PC-9 (cell line): ENCODE measurements at regions of chr7 and their contacts with region 1.

Region 1: GRCh38 chr7:139340037-139340807 is 915 bp upstream of the FMC1 start:
- DNase-seq: peak; percentile 99
- H3K4me3 ChIP-seq: peak overlapping the region; percentile 80
- H3K27ac ChIP-seq: peak overlapping the region; percentile 93
- H3K4me1 ChIP-seq: peaks cover 10% of the 10 kb centered on the region; the same call in 1 of the 2 replicates
- H3K27me3 ChIP-seq: no peaks in the 10 kb centered on the region
- CTCF ChIP-seq: peak; percentile 80

Region 2: DNA sequence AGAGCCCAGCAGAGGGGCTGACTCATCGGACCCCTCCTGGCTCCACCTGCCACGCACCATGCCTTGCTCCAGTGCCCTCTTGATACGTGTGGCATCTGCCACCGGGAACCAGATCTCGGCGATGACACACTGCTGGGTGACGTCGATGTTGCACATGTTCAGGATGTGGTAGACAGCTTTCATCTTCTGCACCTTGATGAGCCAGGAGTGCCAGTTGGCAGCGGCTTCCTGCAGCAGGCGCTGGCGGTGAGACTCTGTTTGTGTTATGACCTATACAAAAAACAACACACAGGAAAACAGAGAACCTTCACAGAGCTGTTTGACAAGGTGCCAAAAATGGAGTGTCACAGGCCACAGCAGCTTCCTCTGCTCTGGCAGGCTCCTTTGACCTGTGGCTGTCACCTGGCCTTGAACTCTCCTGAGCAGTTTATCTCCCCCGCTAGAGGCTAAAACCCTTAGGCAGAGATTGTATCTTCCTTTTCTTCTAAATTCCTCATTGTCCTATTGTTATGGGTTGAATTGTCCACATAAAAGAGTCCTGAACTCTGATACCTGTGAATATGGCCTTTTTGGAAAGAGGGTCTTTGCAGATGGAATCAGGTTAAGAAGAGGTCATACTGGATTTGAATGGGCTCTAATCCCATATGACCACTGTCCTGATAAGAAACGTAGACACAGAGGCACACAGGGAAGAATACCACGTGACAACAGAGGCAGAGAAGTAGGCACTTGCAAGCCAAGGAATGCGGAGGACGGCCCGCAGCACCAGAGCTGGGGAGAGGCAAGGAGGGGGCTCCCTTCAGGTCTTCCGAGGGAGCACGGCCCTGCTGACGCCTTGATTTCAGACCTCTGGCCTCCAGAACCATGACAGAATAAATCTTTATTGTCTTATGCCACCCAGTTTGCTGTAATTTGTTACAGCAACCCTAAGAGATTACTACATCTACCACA is 587.4 kb before region 1 on chr7:
- CTCF ChIA-PET with region 1: no interaction called
- POLR2A ChIA-PET with region 1: no interaction called
- intact Hi-C with region 1: loop called (anchors 2 kb)
- DNase-seq: peak; percentile 97 to 100
- H3K4me3 ChIP-seq: no peak overlapping the region
- H3K27ac ChIP-seq: peak overlapping the region; percentile 95
- H3K4me1 ChIP-seq: peaks cover 73% of the 10 kb centered on the region
- H3K27me3 ChIP-seq: no peaks in the 10 kb centered on the region
- CTCF ChIP-seq: no peak

Region 3: GRCh38 chr7:139109188-139109982 is 230.8 kb before region 1 on chr7 and contains the start of gene ZC3HAV1:
- CTCF ChIA-PET with region 1: no interaction called
- POLR2A ChIA-PET with region 1: no interaction called
- intact Hi-C with region 1: loop called (anchors 1 kb)
- DNase-seq: peak; percentile 76 to 88
- H3K4me3 ChIP-seq: peak within 1 kb of the TSS; percentile 93
- H3K27ac ChIP-seq: peak within 1 kb of the TSS; percentile 75
- H3K4me1 ChIP-seq: peaks cover 21% of the 10 kb centered on the region
- H3K27me3 ChIP-seq: no peaks in the 10 kb centered on the region
- CTCF ChIP-seq: no peak
- total RNA-seq, gene ZC3HAV1: 30.8 and 36.7 TPM in 2 replicates

Region 4: GRCh38 chr7:139359366-139360209 is 19.4 kb after region 1 on chr7 and contains the start of gene LUC7L2:
- CTCF ChIA-PET with region 1: no interaction called
- POLR2A ChIA-PET with region 1: interaction called, 3 read pairs
- intact Hi-C with region 1: loop called (anchors 1 kb)
- DNase-seq: peak; percentile 97 to 100
- H3K4me3 ChIP-seq: peak within 1 kb of the TSS; percentile 89
- H3K27ac ChIP-seq: peak within 1 kb of the TSS; percentile 97
- H3K4me1 ChIP-seq: peaks cover 27% of the 10 kb centered on the region
- H3K27me3 ChIP-seq: no peaks in the 10 kb centered on the region
- CTCF ChIP-seq: peak; percentile 4; the same call in 1 of the 2 replicates
- total RNA-seq, gene LUC7L2: 111 and 149 TPM in 2 replicates

Region 5: DNA sequence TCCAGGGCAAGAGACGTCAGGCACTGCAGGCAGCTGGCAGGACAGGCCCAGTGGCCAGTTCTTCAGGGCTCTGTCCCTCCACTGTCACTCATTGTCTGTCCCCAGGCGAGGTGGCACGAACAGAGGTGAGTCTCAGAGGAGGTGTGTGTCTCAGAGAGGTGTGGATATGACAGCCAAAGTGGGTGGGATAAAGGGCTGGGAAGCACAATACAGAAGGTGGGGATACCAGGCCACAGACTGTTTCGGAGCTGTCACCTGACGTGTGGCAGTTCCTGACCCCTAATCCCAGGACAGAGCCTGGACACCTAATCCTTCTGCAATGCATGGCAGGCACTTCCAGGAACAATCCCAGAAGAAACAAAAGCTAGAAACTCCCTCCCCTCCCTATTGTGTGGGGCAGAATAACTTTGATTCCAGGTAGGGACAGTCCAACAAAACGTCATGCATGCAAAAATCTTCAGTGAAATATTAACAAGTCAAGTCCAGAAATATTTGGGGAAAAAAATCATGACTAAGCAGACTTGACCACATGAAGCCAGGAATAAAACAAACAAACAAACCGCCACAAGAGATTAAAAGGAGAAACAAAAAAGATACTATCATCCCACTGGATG is 131.6 kb after region 1 on chr7:
- CTCF ChIA-PET with region 1: no interaction called
- POLR2A ChIA-PET with region 1: no interaction called
- intact Hi-C with region 1: loop called (anchors 5 kb)
- DNase-seq: peak; percentile 58 to 76
- H3K4me3 ChIP-seq: no peak overlapping the region
- H3K27ac ChIP-seq: peak overlapping the region; percentile 25
- H3K4me1 ChIP-seq: peaks cover 12% of the 10 kb centered on the region
- H3K27me3 ChIP-seq: no peaks in the 10 kb centered on the region
- CTCF ChIP-seq: no peak

Region 6: GRCh38 chr7:139482662-139483469 is 142.6 kb after region 1 on chr7:
- CTCF ChIA-PET with region 1: no interaction called
- POLR2A ChIA-PET with region 1: no interaction called
- intact Hi-C with region 1: no loop called
- DNase-seq: no peak
- H3K4me3 ChIP-seq: no peak overlapping the region
- H3K27ac ChIP-seq: no peak overlapping the region
- H3K4me1 ChIP-seq: no peaks in the 10 kb centered on the region
- H3K27me3 ChIP-seq: no peaks in the 10 kb centered on the region
- CTCF ChIP-seq: no peak